Sciatic nerve (tissue), 2 donors: ENCODE measurements at regions of chr12 and their contacts with region 1.

Region 1: GRCh38 chr12:121668750-121669520 is 519 bp downstream of the MORN3 start:
- DNase-seq: no peak
- ATAC-seq: no peak

Region 2: DNA sequence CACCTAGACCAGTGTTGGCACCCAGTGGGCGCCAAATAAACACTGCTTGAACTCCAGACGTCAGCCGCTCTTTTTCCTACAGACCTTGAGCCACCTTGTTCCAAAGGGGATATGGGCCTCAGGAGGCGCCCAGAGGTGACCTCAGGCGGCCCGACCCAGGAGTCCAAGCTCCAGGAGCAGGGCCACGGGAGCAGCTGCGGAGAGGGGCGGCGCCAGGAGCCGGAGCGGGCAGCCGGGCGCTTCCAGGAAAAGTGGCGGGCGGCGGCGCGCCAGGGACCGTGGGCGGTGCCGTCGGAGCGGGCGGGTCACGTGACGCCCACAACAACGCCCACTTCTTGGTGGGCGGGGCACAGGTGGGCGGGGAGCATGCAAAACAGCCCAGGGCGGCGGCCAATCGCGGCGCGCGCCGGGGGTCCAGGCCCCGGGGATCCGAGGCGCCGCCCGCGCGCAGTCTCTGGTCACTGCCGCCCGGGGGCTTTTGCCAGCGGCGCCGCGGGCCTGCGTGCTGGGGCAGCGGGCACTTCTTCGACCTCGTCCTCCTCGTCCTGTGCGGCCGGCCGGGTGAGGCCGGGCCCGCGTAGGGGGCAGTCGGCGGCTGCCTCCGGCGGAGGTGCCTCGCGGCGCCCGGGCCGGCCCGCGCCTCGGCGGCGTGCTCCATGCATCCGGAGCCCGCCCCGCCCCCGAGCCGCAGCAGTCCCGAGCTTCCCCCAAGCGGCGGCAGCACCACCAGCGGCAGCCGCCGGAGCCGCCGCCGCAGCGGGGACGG is 42.7 kb before region 1 on chr12 and contains the start of gene ORAI1:
- intact Hi-C with region 1: loop called (anchors 2 kb)
- DNase-seq: peak; percentile 98
- ATAC-seq: peak; percentile 86
- total RNA-seq, gene ORAI1: 14.0 TPM